ENCODE measurements at regions of chrX and their contacts with region 1.

Region 1: GRCh38 chrX:15471016-15471415 is 22.1 kb downstream of the PIR start:
- DNase-seq: peak; percentile 38 to 81 (median 40)
- ATAC-seq: peak; percentile 98
- H3K4me3 ChIP-seq: no peak overlapping the region
- H3K27ac ChIP-seq: no peak overlapping the region
- H3K4me1 ChIP-seq: peaks cover 0 to 4% of the 10 kb centered on the region in 2 experiments; a peak in 1 of 5 replicates
- H3K27me3 ChIP-seq: no peaks in the 10 kb centered on the region
- CTCF ChIP-seq: peak; percentile 76 to 82 (median 79)
- EP300 ChIP-seq: no peak
- POLR2A ChIP-seq: no peak
- RAD21 ChIP-seq: peak; percentile 84 to 90

Region 2: DNA sequence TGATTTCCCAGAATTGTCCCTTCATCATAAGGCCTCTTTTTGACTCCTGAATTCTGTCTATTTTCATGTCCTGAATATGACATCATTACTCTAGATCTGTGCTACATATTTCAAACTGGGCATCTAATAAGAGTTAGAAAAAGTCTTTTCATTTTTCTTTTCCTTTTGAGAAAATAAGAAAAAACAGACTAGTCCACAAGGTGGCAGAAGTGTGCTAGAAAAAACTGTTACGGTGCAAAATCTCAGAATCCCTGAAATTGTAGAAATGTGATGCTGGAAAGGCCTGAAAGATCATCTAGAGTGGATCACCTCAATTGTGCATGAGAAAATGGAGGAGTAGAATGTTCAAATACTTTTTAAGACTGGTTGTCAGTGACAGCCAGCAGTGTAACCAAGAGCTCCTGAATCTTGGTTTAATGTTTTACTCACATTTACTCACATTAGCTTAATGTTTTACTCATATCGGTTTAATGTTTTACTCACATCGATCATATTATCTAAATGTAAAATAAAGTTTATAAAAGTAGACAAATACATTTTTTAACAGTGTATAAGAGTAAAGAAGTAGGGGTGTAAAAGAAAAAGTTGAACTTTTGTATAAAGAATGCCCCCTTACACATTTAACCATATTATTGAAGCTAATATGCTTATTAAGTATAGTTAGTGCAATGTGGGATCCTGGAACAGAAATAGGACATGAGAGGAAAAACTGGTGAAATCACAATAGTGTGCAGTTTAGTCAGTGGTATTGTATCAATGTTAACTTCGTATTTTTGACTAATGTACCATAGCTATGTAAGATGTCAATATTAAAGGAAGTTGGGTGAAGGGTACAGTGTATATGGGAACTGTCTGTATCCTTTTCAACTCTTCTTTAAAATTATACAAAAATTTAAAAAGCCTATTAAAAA is 170.8 kb before region 1 on chrX:
- CTCF ChIA-PET with region 1: no interaction called
- POLR2A ChIA-PET with region 1: no interaction called
- in situ Hi-C with region 1: no loop called
- intact Hi-C with region 1: loop called (anchors 1 kb)
- DNase-seq: peak; percentile 10 to 27 (median 15)
- ATAC-seq: no peak
- H3K4me3 ChIP-seq: no peak overlapping the region
- H3K27ac ChIP-seq: no peak overlapping the region
- H3K4me1 ChIP-seq: no peaks in the 10 kb centered on the region; a peak in 1 of 5 replicates
- H3K27me3 ChIP-seq: no peaks in the 10 kb centered on the region; a peak in 1 of 5 replicates
- CTCF ChIP-seq: peak; percentile 17 to 52 (median 51); a peak in 3 of 6 replicates
- EP300 ChIP-seq: no peak
- POLR2A ChIP-seq: no peak
- RAD21 ChIP-seq: peak; percentile 40 to 60

Region 3: DNA sequence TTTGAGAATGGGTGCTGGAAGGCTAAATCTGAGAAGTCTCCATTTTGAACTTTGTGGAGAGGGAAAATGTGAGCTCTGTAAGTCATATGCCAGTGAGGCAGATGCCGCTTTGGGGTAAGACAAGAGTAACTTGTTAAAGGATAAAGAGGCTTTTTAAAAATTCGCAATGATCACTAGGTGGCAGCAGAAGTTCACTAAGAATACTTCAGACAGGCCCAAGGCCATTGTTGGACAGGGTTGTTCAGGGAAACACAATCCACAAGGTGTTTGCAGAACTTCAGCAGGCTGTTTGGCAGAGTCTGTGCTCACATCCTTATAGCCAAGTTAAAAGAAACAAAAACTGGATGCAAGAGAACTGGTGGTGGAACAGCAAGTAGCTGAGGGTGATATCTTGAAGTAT is 122.0 kb before region 1 on chrX:
- CTCF ChIA-PET with region 1: interaction called, 18 read pairs
- POLR2A ChIA-PET with region 1: interaction called, 3 read pairs
- in situ Hi-C with region 1: loop called (anchors 25 kb)
- intact Hi-C with region 1: loop called (anchors 1 kb)
- DNase-seq: peak; percentile 13 to 69 (median 22)
- ATAC-seq: peak; percentile 92
- H3K4me3 ChIP-seq: no peak overlapping the region
- H3K27ac ChIP-seq: no peak overlapping the region
- H3K4me1 ChIP-seq: no peaks in the 10 kb centered on the region
- H3K27me3 ChIP-seq: peaks cover 0 to 2% of the 10 kb centered on the region in 2 experiments; a peak in 2 of 5 replicates
- CTCF ChIP-seq: peak; percentile 50 to 70 (median 57)
- EP300 ChIP-seq: no peak
- POLR2A ChIP-seq: no peak
- RAD21 ChIP-seq: peak; percentile 65 to 78

Region 4: DNA sequence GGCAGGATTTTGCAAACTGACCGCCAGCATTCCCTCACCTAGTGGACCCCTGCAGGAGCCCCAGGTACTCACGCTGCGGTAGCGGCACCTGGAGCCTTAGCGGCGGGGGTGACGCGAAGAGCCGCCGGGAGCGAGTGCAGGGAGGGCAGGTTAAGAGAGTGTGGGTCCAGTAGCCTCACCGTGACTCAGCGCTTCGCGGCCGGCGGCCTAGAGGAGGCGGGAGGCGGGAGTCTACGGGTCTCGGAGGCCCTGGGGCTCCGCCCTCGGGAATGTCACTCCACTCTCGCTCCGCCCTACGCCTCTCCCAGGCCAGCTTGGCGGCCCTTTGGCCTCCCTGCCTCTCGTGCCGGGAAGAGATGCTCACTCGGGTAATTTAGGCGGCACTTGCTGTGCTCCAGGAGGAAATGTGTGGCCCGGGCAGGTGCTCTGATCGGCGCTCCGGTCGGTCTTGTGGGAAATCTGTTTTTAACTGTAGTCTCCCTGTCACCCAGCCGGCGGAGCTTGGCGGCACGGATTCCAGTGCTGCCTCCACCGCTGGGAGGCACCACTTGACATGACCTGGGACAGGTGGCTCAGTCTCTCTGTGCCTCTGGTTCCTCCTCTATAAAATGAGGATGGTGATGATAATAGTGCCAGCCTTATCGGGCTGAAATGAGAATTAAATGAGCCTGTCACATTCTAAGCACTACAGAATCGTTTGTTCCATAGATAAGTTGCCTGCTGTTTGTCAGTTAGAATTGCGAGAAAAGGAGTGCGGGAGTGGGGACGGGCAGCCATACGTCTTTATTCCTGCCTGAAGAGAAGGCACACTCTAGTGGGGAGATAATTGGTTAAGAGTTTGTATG is 22.3 kb after region 1 on chrX and contains the start of gene PIR:
- CTCF ChIA-PET with region 1: interaction called, 3 read pairs
- POLR2A ChIA-PET with region 1: no interaction called
- in situ Hi-C with region 1: no loop called
- intact Hi-C with region 1: loop called (anchors 1 kb)
- DNase-seq: peak; percentile 88 to 95 (median 90)
- ATAC-seq: peak; percentile 99
- H3K4me3 ChIP-seq: peak within 1 kb of the TSS; percentile 44
- H3K27ac ChIP-seq: peak within 1 kb of the TSS; percentile 77
- H3K4me1 ChIP-seq: peaks cover 10 to 20% of the 10 kb centered on the region in 2 experiments; a peak in 3 of 5 replicates
- H3K27me3 ChIP-seq: no peaks in the 10 kb centered on the region
- CTCF ChIP-seq: peak; percentile 60 to 82 (median 71)
- EP300 ChIP-seq: peak; percentile 51
- POLR2A ChIP-seq: peak; percentile 64
- RAD21 ChIP-seq: peak; percentile 35 to 43; a peak in 3 of 4 replicates
- polyA plus RNA-seq, gene PIR: 25.1 to 27.3 TPM

Region 5: GRCh38 chrX:15645258-15645657 is 174.2 kb after region 1 on chrX:
- CTCF ChIA-PET with region 1: no interaction called
- POLR2A ChIA-PET with region 1: no interaction called
- in situ Hi-C with region 1: no loop called
- intact Hi-C with region 1: loop called (anchors 5 kb)
- DNase-seq: peak in 1 of 4 experiments; percentile 8
- ATAC-seq: no peak; the same call in 2 of the 3 replicates
- H3K4me3 ChIP-seq: no peak overlapping the region
- H3K27ac ChIP-seq: no peak overlapping the region
- H3K4me1 ChIP-seq: no peaks in the 10 kb centered on the region
- H3K27me3 ChIP-seq: no peaks in the 10 kb centered on the region; a peak in 1 of 5 replicates
- CTCF ChIP-seq: 0 out of 6 replicates have a peak, but pooled peaks of 1 of the 3 experiments have one; percentile 21
- EP300 ChIP-seq: no peak
- POLR2A ChIP-seq: no peak
- RAD21 ChIP-seq: peak in 1 of 2 experiments; percentile 37; a peak in 2 of 4 replicates

Measured in K562 (cell line).